Activated naive CD8-positive, alpha-beta T cell treated with anti-CD3 and anti-CD28 coated beads, Interleukin-2, amount 10 ng/mL, durations not matched to agents 7 days and 5 days (primary cell): ENCODE measurements at regions of chr6 and their contacts with region 1.

Region 1: DNA sequence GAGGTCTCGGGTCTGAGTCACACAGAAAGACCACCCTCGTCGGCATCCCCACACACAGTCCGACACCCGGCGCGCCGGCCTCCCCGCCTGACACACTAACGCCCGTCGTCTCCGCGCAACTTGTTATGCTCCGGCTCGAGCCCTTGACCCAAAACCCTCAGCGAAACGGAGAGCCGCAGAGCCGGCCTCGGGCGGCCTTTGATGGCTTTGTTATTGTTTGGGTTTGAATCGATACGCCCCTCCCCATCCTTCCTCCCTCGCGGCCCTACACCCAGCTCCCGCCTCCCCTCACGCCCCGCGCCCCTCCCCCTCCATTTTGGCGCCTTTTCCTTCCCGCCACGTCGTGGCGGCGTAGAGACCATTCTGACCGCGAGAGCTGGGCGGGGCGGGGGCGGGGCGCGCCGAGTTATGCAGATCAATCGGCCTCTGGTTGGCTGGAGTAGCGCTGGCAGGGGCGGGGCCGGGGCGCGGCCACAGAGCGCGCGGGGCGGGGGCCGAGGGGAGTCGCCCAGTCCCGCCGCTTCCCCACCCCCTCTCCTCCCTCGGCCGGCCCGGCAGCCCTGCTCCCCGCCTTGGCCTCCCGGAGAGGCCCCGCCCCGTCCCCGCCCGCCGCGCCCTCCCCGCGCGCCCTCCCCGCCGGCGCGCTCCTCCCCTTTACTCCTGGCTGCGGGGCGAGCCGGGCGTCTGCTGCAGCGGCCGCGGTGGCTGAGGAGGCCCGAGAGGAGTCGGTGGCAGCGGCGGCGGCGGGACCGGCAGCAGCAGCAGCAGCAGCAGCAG is at the start of gene PIM1:
- DNase-seq: peak; percentile 98
- ATAC-seq: peak; percentile 69
- H3K4me3 Mint-ChIP-seq: peak within 1 kb of the TSS; percentile 99
- H3K27ac Mint-ChIP-seq: peak within 1 kb of the TSS; percentile 99
- H3K4me1 Mint-ChIP-seq: peaks cover 23% of the 10 kb centered on the region
- H3K27me3 Mint-ChIP-seq: no peaks in the 10 kb centered on the region
- total RNA-seq, gene PIM1: 428 to 445 TPM

Region 2: GRCh38 chr6:37018198-37019064 is 151.3 kb before region 1 on chr6:
- POLR2A ChIA-PET with region 1: interaction called, 372 read pairs
- DNase-seq: peak; percentile 90
- ATAC-seq: peak; percentile 94
- H3K4me3 Mint-ChIP-seq: peak overlapping the region; percentile 31
- H3K27ac Mint-ChIP-seq: peak overlapping the region; percentile 70
- H3K4me1 Mint-ChIP-seq: peaks cover 51% of the 10 kb centered on the region
- H3K27me3 Mint-ChIP-seq: no peaks in the 10 kb centered on the region

Region 3: DNA sequence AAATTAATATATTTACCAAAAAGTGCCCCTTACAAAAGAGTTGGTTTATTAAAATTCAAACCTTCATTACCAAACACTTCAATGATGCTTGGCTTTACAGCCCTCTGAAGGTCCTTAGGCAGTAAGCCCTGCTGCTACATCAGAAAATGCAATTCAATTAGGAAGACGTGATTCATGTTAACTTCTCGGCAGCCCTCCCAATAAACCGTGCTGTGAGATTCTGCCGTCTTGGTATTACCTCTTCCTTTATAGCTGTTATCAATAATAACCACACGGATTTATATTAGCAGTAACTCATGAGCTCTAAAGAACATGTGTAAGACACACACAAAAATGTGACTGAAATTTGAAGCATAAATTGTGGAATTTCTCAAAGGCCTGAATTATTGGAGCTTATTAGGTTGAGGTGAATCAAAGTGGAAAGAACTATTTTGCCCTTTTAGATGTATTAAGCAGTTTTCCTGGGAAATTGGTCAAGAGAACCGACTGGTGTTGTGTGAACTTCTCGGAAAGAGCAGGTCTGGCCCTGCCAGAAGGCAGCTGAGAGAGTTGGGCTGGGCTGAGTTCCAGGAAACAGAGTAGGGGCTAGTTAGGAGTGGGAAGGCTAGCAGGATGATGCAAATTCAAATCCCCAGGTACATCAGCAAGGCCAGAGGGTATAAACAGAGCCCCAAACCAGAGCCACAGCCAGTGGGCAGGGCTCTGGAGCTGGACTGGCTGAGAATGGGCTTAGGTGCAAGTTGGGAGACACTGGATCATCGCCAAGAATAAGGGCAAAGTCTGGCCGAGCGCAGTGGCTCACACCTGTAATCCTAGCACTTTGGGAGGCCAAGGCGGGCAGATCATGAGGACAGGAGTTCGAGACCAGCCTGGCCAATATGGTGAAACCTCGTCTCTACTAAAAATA is 131.1 kb before region 1 on chr6:
- POLR2A ChIA-PET with region 1: interaction called, 24 read pairs
- DNase-seq: no peak
- ATAC-seq: no peak
- H3K4me3 Mint-ChIP-seq: peak overlapping the region; percentile 16
- H3K27ac Mint-ChIP-seq: peak overlapping the region; percentile 67
- H3K4me1 Mint-ChIP-seq: peaks cover 53% of the 10 kb centered on the region
- H3K27me3 Mint-ChIP-seq: no peaks in the 10 kb centered on the region

Region 4: DNA sequence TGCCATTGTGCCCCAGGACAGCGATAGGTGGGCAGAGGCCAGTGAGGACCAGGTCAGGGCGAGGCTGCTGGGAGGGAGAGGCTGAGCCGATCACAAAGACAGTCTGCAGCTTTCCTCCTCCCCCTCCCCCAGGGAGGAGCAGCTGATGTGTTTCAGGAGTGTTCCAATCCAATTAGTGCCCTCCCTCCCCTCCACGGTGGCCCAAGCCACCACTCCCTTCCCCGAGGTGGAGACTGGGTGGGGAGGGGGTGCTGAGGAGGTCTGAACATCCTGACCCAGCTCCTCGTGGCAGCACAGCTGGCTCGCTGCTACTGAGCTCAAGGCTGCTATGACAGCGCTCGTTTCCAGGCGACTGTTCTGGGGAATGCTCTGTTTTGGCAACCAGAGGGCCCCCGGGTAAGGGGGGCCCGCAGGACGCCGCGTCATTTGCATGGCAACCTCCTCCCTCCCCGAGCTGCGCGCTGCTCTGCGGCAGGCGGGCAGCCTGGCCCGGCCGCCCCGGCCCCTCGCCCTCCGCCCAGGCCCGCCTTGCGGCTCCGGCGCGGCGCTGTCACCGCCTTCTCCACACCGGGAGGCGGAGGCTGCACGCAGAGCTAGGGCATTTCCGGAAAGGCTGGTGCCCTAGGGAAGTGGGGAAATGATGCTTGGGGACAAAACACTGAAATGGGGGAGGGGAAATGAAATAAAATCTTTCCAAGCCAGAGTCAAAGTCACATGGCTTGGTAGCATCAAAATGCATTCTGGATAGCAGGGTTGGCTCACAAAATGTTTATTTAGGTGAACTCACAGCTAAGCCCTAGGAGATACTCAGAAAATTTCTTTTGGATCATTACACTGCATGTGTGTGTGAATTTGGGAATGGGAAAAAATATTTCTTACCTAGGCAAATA is 67.2 kb before region 1 on chr6:
- POLR2A ChIA-PET with region 1: interaction called, 19 read pairs
- DNase-seq: peak; percentile 74
- ATAC-seq: peak; percentile 88
- H3K4me3 Mint-ChIP-seq: peak overlapping the region; percentile 60
- H3K27ac Mint-ChIP-seq: peak overlapping the region; percentile 78
- H3K4me1 Mint-ChIP-seq: peaks cover 35% of the 10 kb centered on the region
- H3K27me3 Mint-ChIP-seq: no peaks in the 10 kb centered on the region

Region 5: DNA sequence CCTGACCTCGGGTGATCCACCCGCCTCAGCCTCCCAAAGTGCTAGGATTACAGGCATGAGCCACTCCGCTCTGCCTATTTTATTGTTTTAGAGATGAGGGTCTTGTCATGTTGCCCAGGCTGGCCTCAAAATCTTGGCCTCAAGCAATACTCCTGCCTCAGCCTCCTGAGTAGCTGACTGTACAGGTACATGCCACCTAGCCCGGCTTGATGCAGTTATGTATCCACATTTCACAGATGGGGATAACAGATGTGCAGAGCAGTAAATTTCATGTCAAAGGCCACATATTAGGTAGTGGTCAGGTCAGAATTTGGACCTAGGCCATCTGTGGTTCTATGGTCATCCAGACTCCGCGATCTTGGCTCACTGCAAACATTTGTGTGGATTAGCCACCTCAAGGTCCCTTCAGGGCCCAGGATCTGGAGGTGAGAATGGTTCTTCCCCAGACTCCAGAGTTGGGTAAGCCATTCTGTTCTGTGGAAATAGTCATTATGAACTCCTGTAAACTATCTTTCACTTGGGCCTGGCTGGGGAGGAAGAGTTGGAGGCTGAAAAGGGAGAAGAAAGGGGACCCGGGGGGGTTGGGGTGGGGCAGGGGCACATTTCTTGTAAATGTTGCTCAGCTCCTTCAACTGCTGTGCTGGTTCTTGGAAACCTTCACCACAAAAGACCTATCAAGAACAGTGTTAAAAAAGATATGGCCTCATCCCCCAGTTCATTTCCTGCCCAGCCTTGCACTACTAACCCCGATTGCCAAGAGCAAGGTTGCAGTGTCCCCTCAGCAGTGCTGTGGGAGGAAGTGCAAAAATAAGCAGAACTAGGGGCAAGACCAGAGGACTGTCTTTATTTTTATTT is 13.3 kb after region 1 on chr6:
- POLR2A ChIA-PET with region 1: interaction called, 315 read pairs
- DNase-seq: peak; percentile 60
- ATAC-seq: peak; percentile 96
- H3K4me3 Mint-ChIP-seq: peak overlapping the region; percentile 68
- H3K27ac Mint-ChIP-seq: peak overlapping the region; percentile 95
- H3K4me1 Mint-ChIP-seq: peaks cover 65% of the 10 kb centered on the region
- H3K27me3 Mint-ChIP-seq: no peaks in the 10 kb centered on the region

Region 6: GRCh38 chr6:37190159-37190535 is 20.5 kb after region 1 on chr6:
- POLR2A ChIA-PET with region 1: interaction called, 315 read pairs
- DNase-seq: peak; percentile 26
- ATAC-seq: peak; percentile 48
- H3K4me3 Mint-ChIP-seq: peak overlapping the region; percentile 60
- H3K27ac Mint-ChIP-seq: peak overlapping the region; percentile 90
- H3K4me1 Mint-ChIP-seq: peaks cover 56% of the 10 kb centered on the region
- H3K27me3 Mint-ChIP-seq: no peaks in the 10 kb centered on the region

Region 7: GRCh38 chr6:37207903-37208456 is 38.3 kb after region 1 on chr6:
- POLR2A ChIA-PET with region 1: interaction called, 571 read pairs
- DNase-seq: peak; percentile 88
- ATAC-seq: peak; percentile 66
- H3K4me3 Mint-ChIP-seq: peak overlapping the region; percentile 76
- H3K27ac Mint-ChIP-seq: peak overlapping the region; percentile 92
- H3K4me1 Mint-ChIP-seq: peaks cover 63% of the 10 kb centered on the region
- H3K27me3 Mint-ChIP-seq: no peaks in the 10 kb centered on the region